ENCODE measurements at regions of chr1 and their contacts with region 1.

Region 1: GRCh38 chr1:52927212-52928014 is at the start of gene SCP2:
- DNase-seq: peak; percentile 73
- H3K4me3 Mint-ChIP-seq: peak within 1 kb of the TSS; percentile 91
- H3K27ac Mint-ChIP-seq: peak within 1 kb of the TSS; percentile 70
- H3K4me1 Mint-ChIP-seq: peaks cover 16% of the 10 kb centered on the region
- H3K27me3 Mint-ChIP-seq: no peaks in the 10 kb centered on the region
- total RNA-seq, gene SCP2: 58.8 and 66.1 TPM in 2 replicates

Region 2: GRCh38 chr1:52842643-52843309 is 84.6 kb before region 1 on chr1 and contains the start of gene ZYG11A:
- intact Hi-C with region 1: loop called (anchors 10 kb)
- DNase-seq: peak; percentile 78
- H3K4me3 Mint-ChIP-seq: peak within 1 kb of the TSS; percentile 65
- H3K27ac Mint-ChIP-seq: no peak within 1 kb of the TSS
- H3K4me1 Mint-ChIP-seq: peaks cover 2% of the 10 kb centered on the region
- H3K27me3 Mint-ChIP-seq: peaks cover 18% of the 10 kb centered on the region
- total RNA-seq, gene ZYG11A: 0.30 and 0.37 TPM in 2 replicates

Measured in activated T-helper 2 cell treated with anti-CD3 and anti-CD28 coated beads, Interferon-gamma antibody, Interleukin-2, Interleukin-4, amounts not matched to agents 10 μg/mL and 5 μg/mL and 100 μg/mL, durations not matched to agents 14 hours and 24 hours and 36 hours (primary cell).